BJ (cell line): ENCODE measurements at regions of chr15 and their contacts with region 1.

Region 1: GRCh38 chr15:65431731-65432130 is 9.0 kb upstream of the IGDCC4 start:
- DNase-seq: no peak
- H3K4me3 ChIP-seq: no peak overlapping the region
- H3K27me3 ChIP-seq: no peaks in the 10 kb centered on the region
- CTCF ChIP-seq: no peak

Region 2: GRCh38 chr15:65421360-65422070 is 10.2 kb before region 1 on chr15:
- CTCF ChIA-PET with region 1: interaction called, 10 read pairs
- POLR2A ChIA-PET with region 1: no interaction called
- DNase-seq: no peak
- H3K4me3 ChIP-seq: peak overlapping the region; percentile 55
- H3K27me3 ChIP-seq: peaks cover 19% of the 10 kb centered on the region
- CTCF ChIP-seq: no peak

Region 3: DNA sequence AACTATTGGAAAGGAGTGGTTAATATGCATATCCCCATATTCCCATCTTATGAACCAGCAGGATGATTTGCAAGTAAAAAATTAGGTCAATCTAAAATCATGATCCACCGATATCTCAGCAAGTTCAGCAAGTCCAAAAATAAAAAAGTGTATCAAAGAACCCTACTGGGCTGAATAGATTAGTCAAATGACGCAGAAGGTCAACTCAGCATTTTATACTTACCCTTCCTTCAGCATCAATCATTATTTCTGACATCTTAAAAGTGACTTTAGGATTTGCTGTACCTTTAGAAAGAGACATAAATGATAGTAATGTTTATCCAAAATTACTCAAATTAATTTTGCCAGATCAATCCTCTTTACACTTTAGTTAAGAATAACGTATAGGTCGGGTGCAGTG is 53.1 kb after region 1 on chr15:
- CTCF ChIA-PET with region 1: no interaction called
- POLR2A ChIA-PET with region 1: no interaction called
- DNase-seq: no peak
- H3K4me3 ChIP-seq: no peak overlapping the region
- H3K27me3 ChIP-seq: no peaks in the 10 kb centered on the region
- CTCF ChIP-seq: no peak